ENCODE measurements at regions of chr4 and their contacts with region 1.

Region 1: DNA sequence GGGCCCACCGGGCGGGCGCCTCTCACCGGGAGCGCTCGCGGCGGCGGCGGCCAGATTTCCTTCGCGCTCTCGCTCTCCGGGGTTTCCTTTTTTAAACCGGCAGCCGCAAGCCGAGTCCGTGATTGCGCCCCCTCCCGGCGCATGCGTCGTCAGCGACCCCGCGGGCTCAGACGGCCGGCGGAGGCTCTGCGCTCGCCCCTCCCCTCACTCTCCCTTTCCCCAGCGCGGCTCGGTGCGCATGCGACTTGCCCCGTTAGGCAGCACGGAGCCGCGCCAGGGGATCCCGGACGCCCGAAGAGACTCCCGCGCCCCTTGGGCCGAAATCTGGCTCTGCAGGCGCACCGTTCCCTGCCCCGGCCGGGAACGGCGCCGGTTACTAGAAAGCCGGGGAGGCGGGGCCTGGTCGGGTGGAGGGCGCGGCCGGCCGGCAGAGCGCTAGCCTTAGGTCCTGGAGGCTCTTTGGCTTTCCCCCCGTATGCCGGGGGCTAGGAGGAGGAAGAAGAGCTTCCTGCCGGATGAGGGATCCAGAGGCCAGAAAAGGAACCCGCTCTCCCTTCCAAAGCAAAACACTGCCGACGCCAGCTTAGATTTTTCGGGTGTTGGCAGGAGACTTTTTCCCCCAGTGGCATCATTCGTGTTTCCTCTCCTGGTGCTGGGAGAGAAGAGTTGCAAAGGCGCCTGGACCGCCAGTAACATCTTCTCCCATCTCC is at the start of gene CLOCK:
- DNase-seq: peak; percentile 87
- CTCF ChIP-seq: peak; percentile 23

Region 2: DNA sequence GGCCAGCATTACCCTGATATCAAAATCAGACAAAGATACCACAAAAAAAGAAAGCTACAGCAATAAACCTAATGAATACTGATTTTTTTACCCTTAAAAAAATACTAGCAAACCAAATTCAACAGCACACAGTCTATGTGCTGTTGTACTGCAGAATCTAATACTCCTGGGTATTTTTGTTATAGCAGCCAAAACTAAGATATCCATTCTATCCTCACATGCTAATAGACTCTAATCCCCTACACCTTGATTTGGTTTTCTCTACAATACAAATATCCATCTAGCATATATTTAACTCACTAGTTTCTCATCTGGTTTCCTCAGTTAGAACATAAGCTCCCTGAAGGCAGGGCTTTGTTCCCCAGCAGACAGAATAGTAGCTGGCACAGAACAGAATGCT is 12.6 kb before region 1 on chr4:
- CTCF ChIA-PET with region 1: interaction called, 15 read pairs
- POLR2A ChIA-PET with region 1: no interaction called
- DNase-seq: no peak
- CTCF ChIP-seq: no peak

Region 3: DNA sequence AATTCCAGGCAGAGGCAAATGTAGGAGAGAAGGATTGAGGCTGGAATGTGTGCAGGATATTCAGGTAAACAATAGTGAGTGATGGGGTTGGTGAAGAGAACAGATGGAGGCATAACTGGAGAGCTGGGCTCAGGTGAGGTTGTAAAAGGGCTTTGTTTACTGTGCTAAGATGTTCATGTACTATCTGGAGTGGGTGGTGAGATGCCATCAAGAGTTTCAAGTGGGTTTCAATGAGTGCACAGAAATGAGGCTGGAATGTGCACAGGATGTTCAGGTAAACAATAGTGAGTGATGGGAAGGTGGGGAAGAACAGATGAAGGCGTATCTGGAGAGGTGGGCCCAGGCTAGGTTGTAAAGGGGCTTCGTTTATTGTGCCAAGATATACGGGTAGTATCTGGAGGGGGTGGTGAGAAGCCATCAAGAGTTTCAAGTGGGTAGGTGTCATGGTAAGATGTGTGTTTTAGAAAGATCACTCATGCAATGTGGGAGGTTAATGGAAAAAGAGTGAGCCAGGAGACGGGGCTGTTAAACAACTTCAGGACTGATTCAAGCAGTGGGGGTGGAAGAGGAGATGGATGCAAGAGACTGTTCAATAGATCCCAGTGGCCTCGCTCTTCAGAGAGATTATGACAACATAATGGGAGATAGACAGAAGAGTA is 114.6 kb after region 1 on chr4:
- CTCF ChIA-PET with region 1: no interaction called
- POLR2A ChIA-PET with region 1: no interaction called
- DNase-seq: no peak
- CTCF ChIP-seq: no peak

Measured in GM10248 (cell line).